Activated CD4-positive, alpha-beta T cell treated with anti-CD3 and anti-CD28 coated beads, Interleukin-2, amount 10 ng/mL, durations not matched to agents 24 days and 14 days (primary cell): ENCODE measurements at regions of chr1 and their contacts with region 1.

Region 1: DNA sequence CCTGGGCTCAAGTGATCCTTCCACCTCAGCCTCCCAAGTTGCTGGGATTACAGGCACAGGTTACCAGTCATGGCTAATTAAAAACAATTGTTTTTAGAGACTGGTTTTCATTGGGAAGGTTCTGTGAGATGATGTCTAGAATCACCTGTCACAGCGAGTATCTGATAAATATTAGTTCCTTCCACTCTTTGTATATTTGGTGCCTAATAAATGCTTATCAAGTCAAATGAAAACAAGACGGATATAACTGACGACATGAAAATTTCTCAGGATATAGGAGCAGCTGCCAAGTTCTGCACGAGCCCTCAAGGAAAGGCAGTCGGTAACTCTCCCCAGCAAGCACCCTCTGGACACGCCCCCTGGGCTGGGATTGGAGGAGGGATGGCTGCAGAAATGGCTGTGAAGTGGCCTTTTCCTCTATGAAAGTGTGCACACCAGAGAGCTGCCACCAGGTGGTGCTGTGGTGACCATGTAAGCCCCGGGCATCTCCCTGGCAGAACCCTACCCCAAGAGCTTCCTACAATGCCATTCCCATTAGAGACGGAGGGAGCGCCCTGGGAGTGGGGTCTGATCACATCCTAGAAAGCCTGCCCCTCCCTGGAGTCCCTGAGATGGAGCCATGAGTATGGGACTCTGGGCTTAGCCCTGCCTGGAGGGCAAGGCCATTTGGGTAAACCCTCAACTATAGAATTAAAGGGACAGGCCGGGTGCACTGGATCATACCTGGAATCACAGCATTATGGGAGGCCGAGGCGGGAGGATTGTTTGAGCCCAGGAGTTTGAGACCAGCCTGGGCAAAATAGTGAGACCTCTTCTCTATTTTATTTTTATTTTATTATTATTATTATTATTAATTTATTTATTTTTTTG is 50.9 kb downstream of the HTR6 start:
- DNase-seq: peak; percentile 94
- H3K4me3 Mint-ChIP-seq: no peak overlapping the region
- H3K27ac Mint-ChIP-seq: peak overlapping the region; percentile 32
- H3K4me1 Mint-ChIP-seq: peaks cover 17% of the 10 kb centered on the region
- H3K27me3 Mint-ChIP-seq: no peaks in the 10 kb centered on the region

Region 2: DNA sequence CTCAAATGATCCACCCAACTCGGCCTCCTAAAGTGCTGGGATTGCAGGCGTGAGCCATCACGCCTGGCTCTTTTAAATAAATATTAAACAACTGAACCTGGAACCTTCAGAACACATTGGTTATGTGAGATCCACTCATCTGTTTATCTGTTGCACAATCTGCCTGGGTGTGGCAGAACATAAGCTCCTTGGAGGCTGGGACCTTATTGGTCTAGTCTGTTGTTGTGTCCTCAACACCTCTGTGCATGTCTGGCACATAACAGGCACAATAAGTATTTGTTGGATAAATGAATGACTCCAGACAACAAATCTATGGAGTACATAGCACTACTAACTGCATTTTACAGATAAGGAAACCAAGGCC is 75.6 kb before region 1 on chr1:
- intact Hi-C with region 1: no loop called
- DNase-seq: no peak
- H3K4me3 Mint-ChIP-seq: no peak overlapping the region
- H3K27ac Mint-ChIP-seq: no peak overlapping the region
- H3K4me1 Mint-ChIP-seq: peaks cover 6% of the 10 kb centered on the region
- H3K27me3 Mint-ChIP-seq: peaks cover 19% of the 10 kb centered on the region

Region 3: GRCh38 chr1:19728413-19729145 is 13.0 kb after region 1 on chr1:
- intact Hi-C with region 1: no loop called
- DNase-seq: no peak
- H3K4me3 Mint-ChIP-seq: no peak overlapping the region
- H3K27ac Mint-ChIP-seq: no peak overlapping the region
- H3K4me1 Mint-ChIP-seq: no peaks in the 10 kb centered on the region
- H3K27me3 Mint-ChIP-seq: no peaks in the 10 kb centered on the region

Region 4: DNA sequence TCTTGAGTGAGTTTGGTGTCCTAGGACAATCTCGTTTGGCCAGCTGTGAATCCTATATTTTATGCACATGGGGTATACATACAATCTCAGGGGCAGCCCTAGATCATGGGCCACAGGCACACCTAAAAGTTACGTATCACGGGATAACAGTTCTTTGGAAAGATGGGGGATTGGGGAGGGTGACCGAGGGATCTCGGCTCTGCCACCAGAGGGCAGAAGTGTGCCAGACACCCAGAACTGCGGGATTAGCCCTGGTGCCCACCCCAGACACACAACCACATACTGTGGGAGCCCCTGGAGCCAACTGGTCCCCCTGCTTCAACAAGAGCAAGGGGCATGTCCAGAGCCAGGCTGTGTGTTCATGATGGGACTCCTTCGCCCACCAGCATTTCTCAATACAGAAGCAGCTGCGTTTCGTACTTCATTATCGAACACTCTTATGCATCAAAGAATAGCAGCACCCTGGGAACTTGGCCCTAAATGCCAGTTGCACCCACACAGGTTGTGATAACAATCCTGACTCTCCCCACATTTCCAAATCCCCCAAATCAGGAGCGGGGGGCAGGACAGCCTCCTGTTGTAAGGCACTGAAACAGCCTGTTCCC is 46.7 kb after region 1 on chr1:
- intact Hi-C with region 1: loop called (anchors 1 kb)
- DNase-seq: peak; percentile 72
- H3K4me3 Mint-ChIP-seq: no peak overlapping the region
- H3K27ac Mint-ChIP-seq: no peak overlapping the region
- H3K4me1 Mint-ChIP-seq: peaks cover 23% of the 10 kb centered on the region
- H3K27me3 Mint-ChIP-seq: no peaks in the 10 kb centered on the region

Region 5: DNA sequence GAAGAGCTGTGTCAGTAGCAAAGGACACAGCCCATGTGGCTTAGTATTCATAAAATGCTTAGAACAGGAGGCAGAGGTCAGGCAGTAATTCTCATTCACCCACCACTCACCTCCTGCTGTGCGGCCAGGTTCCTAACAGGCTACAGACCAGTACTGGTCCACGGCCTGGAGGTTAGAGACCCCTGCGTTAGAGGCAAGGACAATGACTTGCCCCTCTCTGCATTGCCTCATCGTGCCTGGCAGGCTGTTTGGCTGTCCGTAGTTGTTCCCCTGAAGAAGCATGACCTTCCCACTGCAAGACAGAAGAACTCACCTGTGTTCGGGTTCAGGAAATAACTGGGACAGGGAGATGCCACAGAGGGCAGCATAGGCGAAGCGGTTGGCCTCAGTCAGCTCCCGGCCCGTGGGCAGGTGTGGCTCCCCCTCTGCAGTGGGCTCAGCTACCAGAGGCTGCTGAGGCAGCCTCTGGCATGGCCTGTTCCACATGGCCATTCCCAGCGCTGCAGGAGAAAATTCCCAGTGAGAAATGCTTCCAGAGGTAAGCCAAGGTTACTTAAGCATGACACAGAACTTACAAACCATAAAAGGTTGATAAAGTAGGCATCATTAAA is 64.8 kb after region 1 on chr1:
- intact Hi-C with region 1: no loop called
- DNase-seq: no peak
- H3K4me3 Mint-ChIP-seq: no peak overlapping the region
- H3K27ac Mint-ChIP-seq: no peak overlapping the region
- H3K4me1 Mint-ChIP-seq: no peaks in the 10 kb centered on the region
- H3K27me3 Mint-ChIP-seq: no peaks in the 10 kb centered on the region

Region 6: DNA sequence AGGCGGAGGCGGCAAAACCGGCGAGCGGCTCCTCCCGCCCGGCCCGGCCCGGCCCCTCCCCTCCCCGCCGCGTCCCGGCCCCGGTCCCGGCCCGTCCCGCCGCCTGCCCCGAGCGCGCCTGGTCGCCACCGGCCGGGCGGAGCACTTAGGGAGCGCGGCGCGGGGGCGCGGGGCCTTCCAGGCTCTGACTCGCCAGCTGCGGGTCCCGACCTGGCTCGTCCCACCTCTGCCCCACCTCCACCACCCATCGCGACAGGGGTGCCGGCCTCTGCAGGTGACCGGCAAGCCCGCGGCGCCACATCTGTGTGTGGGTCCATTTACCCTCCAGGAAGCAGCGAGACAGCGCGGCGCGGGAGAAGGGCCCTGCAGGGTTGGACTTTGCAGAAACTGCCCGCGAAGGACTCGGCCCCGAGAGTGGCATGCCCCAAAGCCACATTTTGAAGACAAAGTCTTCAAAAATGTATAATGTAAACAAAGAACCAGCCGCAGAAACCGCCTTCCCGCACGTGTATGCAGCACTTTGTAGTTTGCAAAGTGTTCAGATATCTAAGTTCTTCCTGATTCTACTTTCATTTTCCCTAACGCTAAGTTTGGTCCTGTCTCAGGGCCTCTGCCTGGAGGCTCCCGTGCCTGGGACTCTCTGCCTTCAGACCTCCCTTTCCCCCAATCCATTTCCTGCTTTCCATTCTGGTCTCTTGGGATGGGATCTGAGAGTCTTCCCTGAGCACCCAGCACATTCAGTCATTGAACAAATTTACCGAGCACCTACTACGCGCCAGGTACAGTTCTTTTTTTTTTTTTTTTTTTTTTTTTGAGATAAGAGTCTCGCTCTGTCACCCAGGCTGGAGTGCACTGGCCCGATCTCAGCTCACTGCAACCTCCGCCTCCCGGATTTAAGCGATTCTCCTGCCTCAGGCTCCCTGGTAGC is 84.6 kb after region 1 on chr1 and contains the start of gene TMCO4:
- intact Hi-C with region 1: loop called (anchors 10 kb)
- DNase-seq: peak; percentile 86
- H3K4me3 Mint-ChIP-seq: peak within 1 kb of the TSS; percentile 83
- H3K27ac Mint-ChIP-seq: peak within 1 kb of the TSS; percentile 93
- H3K4me1 Mint-ChIP-seq: peaks cover 18% of the 10 kb centered on the region
- H3K27me3 Mint-ChIP-seq: peaks cover 7% of the 10 kb centered on the region
- total RNA-seq, gene TMCO4: 12.1 and 12.6 TPM in 2 replicates

Region 7: GRCh38 chr1:19811206-19811851 is 95.8 kb after region 1 on chr1:
- intact Hi-C with region 1: loop called (anchors 5 kb)
- DNase-seq: peak; percentile 85
- H3K4me3 Mint-ChIP-seq: no peak overlapping the region
- H3K27ac Mint-ChIP-seq: no peak overlapping the region
- H3K4me1 Mint-ChIP-seq: no peaks in the 10 kb centered on the region
- H3K27me3 Mint-ChIP-seq: no peaks in the 10 kb centered on the region

Region 8: GRCh38 chr1:19979494-19979977 is 264.0 kb after region 1 on chr1 and contains the start of gene PLA2G2A:
- intact Hi-C with region 1: no loop called
- DNase-seq: no peak
- H3K4me3 Mint-ChIP-seq: no peak within 1 kb of the TSS
- H3K27ac Mint-ChIP-seq: no peak within 1 kb of the TSS
- H3K4me1 Mint-ChIP-seq: no peaks in the 10 kb centered on the region
- H3K27me3 Mint-ChIP-seq: peaks cover 17% of the 10 kb centered on the region
- total RNA-seq, gene PLA2G2A: not detected in 2 replicates